ENCODE measurements at regions of chr16 and their contacts with region 1.

Region 1: GRCh38 chr16:695355-696089 is 5.3 kb upstream of the WDR24 start:
- DNase-seq: peak; percentile 43 to 83 (median 63)
- ATAC-seq: peak; percentile 67 to 71
- H3K4me3 Mint-ChIP-seq: peak overlapping the region; percentile 77 to 86 (median 82)
- H3K27ac Mint-ChIP-seq: peak overlapping the region in 7 of 10 donors; percentile 42 to 85 (median 77)
- H3K4me1 Mint-ChIP-seq: peaks cover 9 to 46% (median 22%) of the 10 kb centered on the region in 4 donors
- H3K27me3 Mint-ChIP-seq: peaks cover 0 to 2% (median 0%) of the 10 kb centered on the region in 5 donors

Region 2: GRCh38 chr16:667780-668518 is 27.6 kb before region 1 on chr16 and contains the start of gene RHOT2:
- POLR2A ChIA-PET with region 1: interaction called, 14 read pairs
- DNase-seq: peak; percentile 79 to 92 (median 86)
- ATAC-seq: peak; percentile 88 to 94
- H3K4me3 Mint-ChIP-seq: peak within 1 kb of the TSS; percentile 65 to 87 (median 80)
- H3K27ac Mint-ChIP-seq: peak within 1 kb of the TSS in 9 of 10 donors; percentile 79 to 96 (median 87)
- H3K4me1 Mint-ChIP-seq: peaks cover 0 to 17% (median 11%) of the 10 kb centered on the region in 4 donors
- H3K27me3 Mint-ChIP-seq: no peaks in the 10 kb centered on the region
- polyA plus RNA-seq, gene RHOT2: 25.1 to 44.8 (median 31.8) TPM

Region 3: DNA sequence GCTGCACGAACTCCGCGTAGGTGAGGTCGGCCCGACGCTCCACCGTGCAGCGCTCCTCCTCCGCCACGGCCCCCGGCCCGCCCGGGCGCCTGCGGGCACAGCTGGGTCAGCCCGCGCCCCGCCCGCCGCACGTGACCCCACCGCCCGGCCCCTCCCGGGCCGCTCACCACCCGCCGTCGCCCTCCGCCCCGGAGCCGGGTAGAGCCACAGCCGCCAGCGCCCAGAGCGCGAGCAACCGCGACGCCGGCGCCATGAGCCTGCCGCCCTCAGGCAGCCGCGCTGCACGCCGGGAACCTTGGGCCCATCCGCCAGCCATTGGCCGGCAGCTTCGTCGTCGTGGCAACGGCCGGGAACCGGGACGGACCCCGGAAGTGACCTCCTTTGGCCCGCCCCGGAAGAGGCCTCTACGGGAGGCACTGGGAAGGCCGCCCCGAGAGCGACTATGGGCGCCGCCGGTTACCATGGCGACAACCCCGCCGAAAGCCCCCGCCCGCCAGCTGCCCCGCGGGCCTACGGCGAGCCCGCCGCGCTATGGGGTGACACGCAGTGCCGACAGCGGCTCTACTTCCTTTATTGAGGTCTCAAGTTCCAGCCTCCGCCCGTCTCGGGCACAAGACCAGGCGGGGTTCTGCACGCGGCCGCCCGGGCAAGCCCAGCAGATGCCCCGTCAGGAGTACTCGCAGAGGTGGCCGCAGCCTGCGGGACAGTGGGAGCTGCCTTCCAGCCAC is 11.3 kb before region 1 on chr16 and contains the start of gene JMJD8:
- POLR2A ChIA-PET with region 1: interaction called, 49 read pairs
- DNase-seq: peak; percentile 91 to 98 (median 92)
- ATAC-seq: peak; percentile 67 to 74
- H3K4me3 Mint-ChIP-seq: peak within 1 kb of the TSS; percentile 60 to 86 (median 76)
- H3K27ac Mint-ChIP-seq: peak within 1 kb of the TSS in 8 of 10 donors; percentile 52 to 93 (median 80)
- H3K4me1 Mint-ChIP-seq: peaks cover 5 to 46% (median 34%) of the 10 kb centered on the region in 4 donors
- H3K27me3 Mint-ChIP-seq: no peaks in the 10 kb centered on the region
- polyA plus RNA-seq, gene JMJD8: 31.7 to 62.8 (median 46.0) TPM

Region 4: GRCh38 chr16:714558-715476 is 19.3 kb after region 1 on chr16 and contains the start of gene METRN:
- POLR2A ChIA-PET with region 1: interaction called, 56 read pairs
- DNase-seq: peak; percentile 79 to 95 (median 85)
- ATAC-seq: peak; percentile 85 to 89
- H3K4me3 Mint-ChIP-seq: peak within 1 kb of the TSS; percentile 19 to 83 (median 64)
- H3K27ac Mint-ChIP-seq: peak within 1 kb of the TSS in 2 of 10 donors; percentile 20 to 52
- H3K4me1 Mint-ChIP-seq: peaks cover 13 to 35% (median 26%) of the 10 kb centered on the region in 4 donors
- H3K27me3 Mint-ChIP-seq: peaks cover 0 to 14% (median 0%) of the 10 kb centered on the region in 5 donors
- polyA plus RNA-seq, gene METRN: 22.1 to 40.9 (median 35.8) TPM

Region 5: DNA sequence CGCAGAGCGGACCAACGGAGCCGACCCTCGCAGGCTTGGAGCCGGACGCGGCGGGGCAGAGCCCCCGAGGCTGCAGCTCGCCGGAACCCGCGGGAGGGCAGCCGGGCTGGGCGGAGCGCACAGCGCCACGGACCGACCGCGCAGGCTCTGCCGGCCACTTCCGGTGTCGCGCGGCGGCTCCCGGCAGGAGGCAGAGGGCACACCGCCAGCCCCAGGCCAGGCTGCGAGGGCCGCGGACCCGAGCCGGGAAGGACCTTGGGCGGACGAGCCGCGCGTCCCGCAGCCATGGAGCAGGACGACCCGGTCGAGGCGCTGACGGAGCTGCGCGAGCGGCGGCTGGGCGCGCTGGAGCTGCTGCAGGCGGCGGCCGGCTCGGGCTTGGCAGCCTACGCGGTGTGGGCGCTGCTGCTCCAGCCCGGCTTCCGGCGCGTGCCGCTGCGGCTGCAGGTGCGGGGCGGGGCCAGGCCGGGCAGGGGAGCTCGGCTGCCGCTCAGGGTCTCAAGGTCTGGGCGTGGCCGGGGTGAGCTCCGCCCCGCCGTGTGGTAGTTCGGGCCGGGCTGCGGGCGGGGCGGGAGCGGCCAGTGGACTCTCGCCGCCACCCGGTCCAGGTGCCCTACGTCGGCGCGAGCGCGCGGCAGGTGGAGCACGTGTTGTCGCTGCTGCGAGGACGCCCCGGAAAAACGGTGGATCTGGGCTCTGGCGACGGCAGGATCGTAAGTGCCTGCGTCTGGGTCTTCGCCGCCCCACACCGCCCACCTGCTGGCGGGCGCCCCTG is 25.7 kb after region 1 on chr16 and contains the start of gene ANTKMT:
- POLR2A ChIA-PET with region 1: interaction called, 56 read pairs
- DNase-seq: peak; percentile 66 to 83 (median 78)
- ATAC-seq: peak; percentile 71
- H3K4me3 Mint-ChIP-seq: peak within 1 kb of the TSS; percentile 79 to 95 (median 87)
- H3K27ac Mint-ChIP-seq: peak within 1 kb of the TSS; percentile 69 to 96 (median 91)
- H3K4me1 Mint-ChIP-seq: peaks cover 25 to 51% (median 38%) of the 10 kb centered on the region in 4 donors
- H3K27me3 Mint-ChIP-seq: no peaks in the 10 kb centered on the region
- polyA plus RNA-seq, gene ANTKMT: 93.5 to 128 (median 113) TPM

Region 6: GRCh38 chr16:728131-728889 is 32.8 kb after region 1 on chr16:
- POLR2A ChIA-PET with region 1: interaction called, 56 read pairs
- DNase-seq: peak; percentile 48 to 73 (median 65)
- ATAC-seq: peak; percentile 59 to 75
- H3K4me3 Mint-ChIP-seq: peak overlapping the region in 9 of 10 donors; percentile 25 to 73 (median 50)
- H3K27ac Mint-ChIP-seq: no peak overlapping the region
- H3K4me1 Mint-ChIP-seq: peaks cover 5 to 11% (median 7%) of the 10 kb centered on the region in 4 donors
- H3K27me3 Mint-ChIP-seq: no peaks in the 10 kb centered on the region

Region 7: GRCh38 chr16:777826-778225 is 82.3 kb after region 1 on chr16:
- POLR2A ChIA-PET with region 1: no interaction called
- DNase-seq: no peak
- ATAC-seq: no peak
- H3K4me3 Mint-ChIP-seq: no peak overlapping the region
- H3K27ac Mint-ChIP-seq: peak overlapping the region in 2 of 10 donors; percentile 71 to 76
- H3K4me1 Mint-ChIP-seq: no peaks in the 10 kb centered on the region
- H3K27me3 Mint-ChIP-seq: peaks cover 0 to 6% (median 3%) of the 10 kb centered on the region in 5 donors

Measured in naive thymus-derived CD8-positive, alpha-beta T cell (primary cell).